ENCODE measurements at regions of chr1 and their contacts with region 1.

Region 1: DNA sequence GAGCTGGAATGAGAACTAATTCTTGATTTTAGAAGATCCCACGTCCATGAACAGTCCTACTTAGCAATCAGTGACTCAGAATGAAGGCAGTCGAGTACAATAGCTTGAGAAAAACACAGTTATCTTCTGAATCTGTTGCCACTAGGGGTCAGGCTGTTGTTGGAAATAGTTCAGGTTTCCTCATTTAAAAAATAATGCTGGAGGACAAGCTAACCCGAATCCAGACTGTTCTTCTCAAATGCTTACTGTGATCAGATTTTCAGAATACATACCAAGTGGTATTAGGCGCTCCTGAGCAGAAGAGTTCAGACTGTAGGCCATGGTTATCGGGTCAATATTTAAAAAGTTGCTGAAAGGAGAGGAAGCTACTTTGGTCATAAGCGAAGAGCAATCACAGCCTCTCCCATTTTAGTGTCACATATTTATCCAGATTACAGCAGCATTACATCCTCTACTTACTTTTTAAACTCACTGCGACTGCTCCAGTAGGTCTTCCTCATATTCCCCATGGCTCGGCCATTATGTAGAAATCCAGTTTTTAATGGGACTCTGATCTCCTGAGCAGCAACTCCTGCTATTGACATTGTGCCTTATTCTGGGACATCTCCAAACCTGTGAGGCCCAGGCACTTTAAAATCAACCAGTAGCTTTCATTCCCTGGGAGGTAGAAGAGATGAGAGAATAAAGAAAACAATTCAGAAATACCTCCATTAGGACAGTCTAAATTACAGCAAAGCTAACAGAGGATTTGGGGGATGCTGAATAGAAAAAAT is 10.9 kb downstream of the ERRFI1 start:
- DNase-seq: peak; percentile 56
- H3K4me3 Mint-ChIP-seq: no peak overlapping the region
- H3K27ac Mint-ChIP-seq: no peak overlapping the region
- H3K4me1 Mint-ChIP-seq: no peaks in the 10 kb centered on the region
- H3K27me3 Mint-ChIP-seq: peaks cover 14% of the 10 kb centered on the region

Region 2: GRCh38 chr1:7975212-7975865 is 39.9 kb before region 1 on chr1:
- CTCF ChIA-PET with region 1: interaction called, 12 read pairs
- intact Hi-C with region 1: no loop called
- DNase-seq: peak; percentile 56
- H3K4me3 Mint-ChIP-seq: no peak overlapping the region
- H3K27ac Mint-ChIP-seq: peak overlapping the region; percentile 28
- H3K4me1 Mint-ChIP-seq: peaks cover 2% of the 10 kb centered on the region
- H3K27me3 Mint-ChIP-seq: no peaks in the 10 kb centered on the region

Region 3: GRCh38 chr1:8314346-8315280 is 299.4 kb after region 1 on chr1:
- CTCF ChIA-PET with region 1: interaction called, 54 read pairs
- intact Hi-C with region 1: loop called (anchors 1 kb)
- DNase-seq: peak; percentile 70
- H3K4me3 Mint-ChIP-seq: no peak overlapping the region
- H3K27ac Mint-ChIP-seq: no peak overlapping the region
- H3K4me1 Mint-ChIP-seq: peaks cover 9% of the 10 kb centered on the region
- H3K27me3 Mint-ChIP-seq: peaks cover 15% of the 10 kb centered on the region

Region 4: DNA sequence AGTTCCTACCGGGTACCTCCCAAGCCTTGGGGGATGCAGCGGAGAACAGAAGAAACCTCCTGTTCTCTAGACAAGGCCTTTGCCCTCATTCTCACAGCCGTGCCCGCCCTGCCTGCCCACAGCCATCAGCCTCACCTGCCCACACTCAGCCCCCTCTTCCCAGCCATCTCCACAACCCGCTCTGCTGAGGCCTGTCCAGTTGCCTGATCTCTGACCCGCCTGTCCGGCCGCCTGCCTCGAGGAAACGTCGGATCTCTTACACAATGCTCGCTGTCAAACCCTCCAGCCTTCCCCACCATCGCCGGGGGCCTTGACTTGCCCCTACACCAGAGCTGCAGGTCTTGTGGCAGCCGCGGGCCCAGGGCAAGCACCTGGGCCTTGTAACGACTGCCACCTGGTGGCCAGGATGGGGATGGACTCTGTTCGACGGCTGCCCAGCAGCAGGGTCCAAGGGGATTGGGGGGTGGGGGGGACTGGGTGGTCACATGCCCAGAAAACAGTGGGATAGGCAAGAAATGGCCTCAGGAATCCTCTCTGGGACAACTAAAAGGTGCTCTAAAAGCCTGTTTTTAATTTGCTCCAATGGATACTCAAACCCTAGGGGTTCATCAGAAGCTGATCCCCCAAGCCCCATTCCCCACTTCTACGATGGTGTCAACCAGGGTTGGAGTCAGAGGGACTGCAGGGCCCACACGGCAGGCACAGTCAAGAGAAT is 333.7 kb after region 1 on chr1:
- CTCF ChIA-PET with region 1: interaction called, 40 read pairs
- intact Hi-C with region 1: loop called (anchors 1 kb)
- DNase-seq: peak; percentile 75
- H3K4me3 Mint-ChIP-seq: no peak overlapping the region
- H3K27ac Mint-ChIP-seq: no peak overlapping the region
- H3K4me1 Mint-ChIP-seq: peaks cover 4% of the 10 kb centered on the region
- H3K27me3 Mint-ChIP-seq: no peaks in the 10 kb centered on the region

Region 5: GRCh38 chr1:8727809-8728213 is 712.6 kb after region 1 on chr1:
- CTCF ChIA-PET with region 1: no interaction called
- intact Hi-C with region 1: loop called (anchors 10 kb)
- DNase-seq: no peak
- H3K4me3 Mint-ChIP-seq: no peak overlapping the region
- H3K27ac Mint-ChIP-seq: no peak overlapping the region
- H3K4me1 Mint-ChIP-seq: peaks cover 15% of the 10 kb centered on the region
- H3K27me3 Mint-ChIP-seq: no peaks in the 10 kb centered on the region

Measured in activated naive CD4-positive, alpha-beta T cell treated with anti-CD3 and anti-CD28 coated beads for 36 hours (primary cell).